Right ventricle myocardium superior (tissue), 1 donor: ENCODE measurements at regions of chr5 and their contacts with region 1.

Region 1: GRCh38 chr5:154179846-154180710 is 10.5 kb upstream of the GALNT10 start:
- DNase-seq: no peak
- ATAC-seq: peak; percentile 92

Region 2: GRCh38 chr5:153797484-153797883 is 382.6 kb before region 1 on chr5:
- intact Hi-C with region 1: no loop called
- DNase-seq: no peak
- ATAC-seq: no peak

Region 3: GRCh38 chr5:153974131-153974812 is 205.8 kb before region 1 on chr5:
- intact Hi-C with region 1: loop called (anchors 10 kb)
- DNase-seq: no peak
- ATAC-seq: peak; percentile 63

Region 4: DNA sequence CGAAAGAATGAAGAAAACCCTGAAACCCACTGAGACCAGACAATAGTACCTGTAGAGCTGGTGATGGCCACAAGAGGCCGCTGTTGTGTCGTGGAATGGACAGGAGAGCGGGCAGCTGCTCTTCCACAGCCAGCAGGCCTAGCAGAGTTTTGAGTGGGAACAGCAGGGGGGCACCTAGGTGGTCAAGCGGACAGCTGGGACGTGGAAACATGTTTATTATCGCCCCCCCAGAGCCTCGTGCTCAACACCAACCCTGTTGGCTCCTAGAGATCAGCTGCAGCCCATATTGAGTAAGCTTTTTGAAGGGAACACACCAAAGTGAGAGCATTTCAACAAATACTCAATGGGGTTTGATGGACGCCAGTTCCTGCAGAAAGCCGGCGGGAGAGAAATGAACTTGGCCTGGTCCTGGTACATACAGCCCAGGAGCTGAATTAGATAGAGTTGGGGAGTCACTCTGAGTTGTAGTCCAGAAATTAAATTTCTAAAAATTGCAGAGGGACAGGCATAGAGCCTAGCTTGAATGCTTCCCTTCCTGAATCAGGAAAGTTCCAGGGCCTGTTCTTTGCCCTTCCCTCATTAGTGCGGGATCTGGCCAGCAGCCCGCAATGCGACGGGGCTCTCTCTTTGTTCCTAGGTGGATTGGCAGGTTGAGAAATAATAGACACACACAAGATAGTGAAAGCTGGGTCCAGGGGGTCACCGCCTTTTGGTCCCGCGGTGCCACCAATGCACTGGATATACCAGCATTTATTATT is 107.5 kb before region 1 on chr5:
- intact Hi-C with region 1: loop called (anchors 5 kb)
- DNase-seq: peak; percentile 90
- ATAC-seq: peak; percentile 95